Right ventricle myocardium inferior (tissue), 1 donor: ENCODE measurements at regions of chr11 and their contacts with region 1.

Region 1: DNA sequence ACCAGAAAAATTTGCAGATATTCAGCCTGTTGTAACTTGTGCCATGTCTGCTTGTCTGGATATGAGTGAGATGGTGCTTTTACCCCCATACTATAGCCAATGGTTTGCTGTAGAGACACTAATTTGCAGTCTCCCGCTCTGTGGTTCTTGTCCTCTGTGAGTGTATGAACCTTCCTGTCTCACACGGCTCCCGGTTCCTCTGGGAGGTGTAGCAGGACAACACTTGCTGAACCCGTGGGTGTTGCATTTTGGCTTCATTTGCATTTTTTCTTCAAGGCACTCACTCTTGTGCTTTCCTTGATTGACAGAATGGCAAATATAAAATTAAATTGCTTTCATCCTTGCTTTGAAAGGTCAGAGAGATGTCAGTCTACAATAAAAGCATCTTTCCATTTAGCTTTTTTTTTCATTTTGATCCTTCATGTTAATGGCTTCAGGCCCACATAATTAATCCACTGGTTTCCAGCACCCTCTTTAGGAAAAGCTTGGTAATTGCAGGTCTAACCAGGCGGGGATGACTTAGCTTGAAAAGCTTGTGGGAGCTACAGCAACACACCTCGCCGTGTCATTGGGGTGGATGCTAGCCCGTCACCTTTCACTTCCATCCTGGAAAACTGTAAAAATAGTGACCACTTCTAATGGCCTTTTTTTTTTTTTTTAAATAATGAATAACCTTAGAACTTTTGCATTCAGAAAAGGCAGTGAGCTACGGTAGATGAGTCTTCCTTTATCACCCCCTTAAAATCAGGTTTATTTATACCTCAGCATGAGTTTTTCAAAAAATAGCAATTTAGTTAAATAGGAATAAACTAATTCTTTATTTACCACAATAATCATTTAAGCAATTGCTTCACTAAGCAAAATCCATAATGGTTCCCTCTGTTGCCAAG is 27.4 kb upstream of the ST14 start:
- DNase-seq: no peak
- ATAC-seq: peak; percentile 71

Region 2: GRCh38 chr11:129922674-129923073 is 209.5 kb before region 1 on chr11:
- intact Hi-C with region 1: loop called (anchors 1 kb)
- DNase-seq: no peak
- ATAC-seq: no peak